ENCODE measurements at regions of chr1 and their contacts with region 1.

Region 1: DNA sequence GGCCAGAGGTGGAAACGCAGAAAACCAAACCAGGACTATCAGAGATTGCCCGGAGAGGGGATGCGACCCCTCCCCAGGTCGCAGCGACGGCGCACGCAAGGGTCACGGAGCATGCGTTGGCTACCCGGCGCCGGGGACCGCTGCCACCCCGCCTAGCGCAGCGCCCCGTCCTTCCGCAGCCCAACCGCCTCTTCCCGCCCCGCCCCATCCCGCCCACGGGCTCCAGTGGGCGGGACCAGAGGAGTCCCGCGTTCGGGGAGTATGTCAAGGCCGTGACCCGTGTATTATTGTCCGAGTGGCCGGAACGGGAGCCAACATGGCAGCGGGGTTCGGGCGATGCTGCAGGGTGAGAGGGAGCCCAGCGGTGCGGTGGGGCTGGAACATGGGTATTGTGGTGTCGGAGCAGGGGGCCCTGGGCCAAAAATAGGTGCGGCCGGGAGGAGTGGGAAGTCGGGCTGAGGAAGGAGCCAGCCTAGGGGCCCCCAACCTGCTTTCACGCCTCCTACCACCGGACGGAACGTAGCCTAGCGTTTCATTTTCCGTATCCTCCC is at the start of gene ACADM:
- DNase-seq: peak; percentile 86
- H3K4me3 Mint-ChIP-seq: peak within 1 kb of the TSS; percentile 100
- H3K27ac Mint-ChIP-seq: peak within 1 kb of the TSS; percentile 97
- H3K4me1 Mint-ChIP-seq: peaks cover 37% of the 10 kb centered on the region
- H3K27me3 Mint-ChIP-seq: no peaks in the 10 kb centered on the region
- total RNA-seq, gene ACADM: 37.1 to 38.5 TPM

Region 2: GRCh38 chr1:74197657-74198552 is 1526.6 kb before region 1 on chr1 and contains the starts of genes FPGT and LRRIQ3:
- CTCF ChIA-PET with region 1: no interaction called
- intact Hi-C with region 1: loop called (anchors 2 kb)
- DNase-seq: peak; percentile 95
- H3K4me3 Mint-ChIP-seq: peak within 1 kb of the TSS; percentile 89
- H3K27ac Mint-ChIP-seq: peak within 1 kb of the TSS; percentile 92
- H3K4me1 Mint-ChIP-seq: peaks cover 17% of the 10 kb centered on the region
- H3K27me3 Mint-ChIP-seq: no peaks in the 10 kb centered on the region
- total RNA-seq, gene FPGT: 11.0 to 13.9 TPM
- total RNA-seq, gene LRRIQ3: 1.1 to 1.2 TPM

Region 3: GRCh38 chr1:75615613-75616435 is 108.7 kb before region 1 on chr1:
- CTCF ChIA-PET with region 1: no interaction called
- intact Hi-C with region 1: loop called (anchors 5 kb)
- DNase-seq: peak; percentile 30
- H3K4me3 Mint-ChIP-seq: peak overlapping the region; percentile 69
- H3K27ac Mint-ChIP-seq: no peak overlapping the region
- H3K4me1 Mint-ChIP-seq: peaks cover 16% of the 10 kb centered on the region
- H3K27me3 Mint-ChIP-seq: peaks cover 74% of the 10 kb centered on the region

Region 4: GRCh38 chr1:76074321-76075187 is 350.0 kb after region 1 on chr1 and contains the start of gene ST6GALNAC3:
- CTCF ChIA-PET with region 1: no interaction called
- intact Hi-C with region 1: loop called (anchors 1 kb)
- DNase-seq: peak; percentile 78
- H3K4me3 Mint-ChIP-seq: peak within 1 kb of the TSS; percentile 83
- H3K27ac Mint-ChIP-seq: no peak within 1 kb of the TSS
- H3K4me1 Mint-ChIP-seq: peaks cover 25% of the 10 kb centered on the region
- H3K27me3 Mint-ChIP-seq: no peaks in the 10 kb centered on the region
- total RNA-seq, gene ST6GALNAC3: 2.5 to 2.8 TPM

Region 5: DNA sequence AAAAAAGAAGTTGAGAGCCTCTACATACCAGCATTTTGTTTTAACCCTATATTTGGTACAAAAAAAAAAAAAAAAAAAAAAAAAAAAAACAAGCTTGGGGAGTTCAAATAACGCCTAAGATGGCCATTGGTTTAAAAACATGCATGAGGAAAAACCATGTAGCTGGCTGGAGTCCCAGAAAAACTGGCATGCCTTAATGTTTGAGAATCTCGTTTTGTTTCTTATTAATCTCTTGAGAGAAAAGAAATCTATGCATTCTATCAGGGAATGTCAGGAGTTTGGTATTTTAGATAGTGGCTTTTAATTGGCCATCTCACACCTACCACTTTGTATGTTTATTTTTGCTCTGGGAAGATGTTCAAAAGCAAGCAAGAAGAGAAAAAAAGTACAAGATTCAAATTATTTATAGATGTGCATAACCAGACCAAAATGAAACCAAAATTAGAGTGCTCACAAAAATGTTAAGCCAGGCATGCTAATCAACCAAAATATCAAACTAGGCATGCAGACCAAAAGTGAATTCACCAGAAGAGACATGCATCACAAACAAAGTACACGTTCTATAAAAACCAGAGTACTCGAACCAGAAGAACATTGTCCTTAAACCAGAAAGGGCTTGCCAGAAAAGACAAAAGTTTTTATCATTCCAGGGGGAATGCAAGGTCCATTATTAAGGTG is 1713.8 kb after region 1 on chr1:
- CTCF ChIA-PET with region 1: no interaction called
- intact Hi-C with region 1: loop called (anchors 10 kb)
- DNase-seq: no peak
- H3K4me3 Mint-ChIP-seq: peak overlapping the region; percentile 70
- H3K27ac Mint-ChIP-seq: peak overlapping the region; percentile 81
- H3K4me1 Mint-ChIP-seq: peaks cover 28% of the 10 kb centered on the region
- H3K27me3 Mint-ChIP-seq: no peaks in the 10 kb centered on the region